Right ventricle myocardium superior (tissue), 1 donor: ENCODE measurements at regions of chr11 and their contacts with region 1.

Region 1: DNA sequence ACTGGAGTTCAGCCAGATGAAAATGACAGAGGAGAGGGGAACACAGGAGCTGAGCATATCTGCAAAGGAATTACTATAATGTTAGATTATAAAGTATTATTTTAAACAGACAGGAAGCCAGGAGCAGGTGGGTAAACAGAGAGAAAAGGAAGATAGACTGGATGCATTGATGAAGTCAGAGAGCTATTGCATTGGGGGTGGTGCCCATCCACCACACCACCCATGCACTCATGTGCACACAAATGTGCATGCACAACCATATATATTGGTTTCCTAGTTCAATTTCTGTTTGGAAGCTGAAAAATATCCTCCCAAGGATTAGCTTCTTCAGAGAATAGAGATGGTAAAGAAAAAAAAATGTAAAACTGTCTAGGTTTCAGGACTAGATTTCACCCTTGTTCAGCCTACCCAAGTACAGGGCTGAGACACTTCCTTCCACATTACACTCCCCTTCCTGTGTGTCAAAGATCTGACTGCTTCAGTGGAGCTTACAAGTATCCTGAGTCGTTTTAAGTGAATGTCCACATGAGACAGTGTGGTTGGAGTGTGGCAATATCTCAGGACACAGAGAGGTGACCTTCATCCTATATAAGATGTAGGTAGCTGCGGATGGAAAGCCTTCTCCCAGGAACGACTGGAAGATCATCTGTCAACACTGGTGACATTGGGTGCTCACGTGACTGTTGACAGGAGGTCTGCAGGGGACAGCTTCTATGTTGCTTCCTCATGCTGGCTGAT is 12.2 kb upstream of the SMPD1 start:
- DNase-seq: no peak
- ATAC-seq: peak; percentile 49

Region 2: DNA sequence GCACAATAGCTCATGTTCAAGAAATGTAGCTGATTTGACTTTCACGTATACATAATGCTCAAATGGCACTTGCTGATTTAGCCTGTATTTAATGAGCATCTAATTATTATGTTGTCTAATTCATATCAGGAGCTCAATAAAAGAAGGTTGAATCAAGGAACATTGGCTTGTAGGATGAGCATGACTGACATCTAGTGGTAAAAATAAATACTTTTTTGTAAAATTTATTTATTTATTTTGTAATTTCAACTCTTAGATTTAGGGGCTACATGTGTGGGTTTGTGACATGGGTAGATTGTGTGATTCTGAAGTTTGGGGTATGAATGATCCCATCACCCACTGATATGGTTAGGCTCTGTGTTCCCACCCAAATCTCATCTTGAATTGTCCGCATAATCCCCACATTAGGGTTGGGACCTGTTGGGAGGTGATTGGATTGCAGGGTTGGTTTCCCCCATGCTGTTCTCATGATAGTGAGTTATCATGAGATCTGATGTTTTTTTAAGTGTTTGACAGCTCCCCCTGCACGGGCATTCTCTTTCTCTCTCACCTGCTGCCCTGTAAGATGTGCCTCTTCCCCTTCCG is 486.8 kb before region 1 on chr11:
- intact Hi-C with region 1: no loop called
- DNase-seq: no peak
- ATAC-seq: no peak

Region 3: DNA sequence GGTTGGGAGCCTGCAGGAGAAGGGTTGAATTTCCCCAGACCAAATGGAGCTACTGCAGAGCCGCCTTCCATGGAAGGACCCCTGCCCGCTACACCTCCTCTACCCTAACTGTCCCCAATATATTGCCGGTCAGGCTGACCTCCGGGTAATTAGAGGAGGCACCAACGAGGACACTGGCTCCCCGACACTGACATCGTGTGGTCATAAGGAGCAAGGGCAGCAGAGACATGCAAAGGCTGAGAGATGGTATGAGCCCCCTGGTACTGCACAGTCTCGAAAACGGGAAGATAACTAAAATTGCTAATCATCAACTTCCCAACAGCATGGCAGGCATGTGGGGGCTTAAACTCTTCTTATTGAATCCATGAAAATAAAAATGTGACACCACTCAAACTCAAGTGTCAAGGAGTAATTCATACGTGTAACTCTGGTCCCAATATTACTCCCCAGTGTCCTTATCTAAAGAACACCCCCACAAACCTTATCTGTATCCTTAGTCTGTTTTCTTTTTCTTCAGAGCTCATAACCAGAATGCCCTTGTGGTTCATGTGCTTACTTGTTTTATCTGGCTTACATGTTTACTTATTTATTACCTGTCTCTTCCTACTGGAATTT is 62.2 kb before region 1 on chr11:
- intact Hi-C with region 1: no loop called
- DNase-seq: peak; percentile 73
- ATAC-seq: peak; percentile 19

Region 4: DNA sequence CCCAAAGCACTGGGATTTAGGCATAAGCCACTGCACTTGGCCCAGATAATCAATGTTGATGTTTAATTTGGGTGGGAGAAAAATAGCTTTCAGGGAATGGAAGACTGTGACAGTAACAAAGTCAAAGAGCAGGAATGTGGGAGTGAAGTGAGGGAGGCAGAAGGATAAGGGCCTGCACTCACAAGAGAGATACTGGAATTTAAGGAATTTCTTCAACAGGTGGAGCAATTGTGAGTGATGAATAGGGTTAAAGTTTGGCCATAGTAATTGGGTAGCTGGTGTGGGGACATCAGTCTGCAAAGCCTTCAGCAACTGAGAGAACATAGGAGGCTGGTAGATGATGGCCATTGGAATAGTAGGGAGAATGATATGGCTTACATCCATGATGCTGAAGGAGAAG is 49.4 kb after region 1 on chr11:
- intact Hi-C with region 1: no loop called
- DNase-seq: no peak
- ATAC-seq: no peak

Region 5: DNA sequence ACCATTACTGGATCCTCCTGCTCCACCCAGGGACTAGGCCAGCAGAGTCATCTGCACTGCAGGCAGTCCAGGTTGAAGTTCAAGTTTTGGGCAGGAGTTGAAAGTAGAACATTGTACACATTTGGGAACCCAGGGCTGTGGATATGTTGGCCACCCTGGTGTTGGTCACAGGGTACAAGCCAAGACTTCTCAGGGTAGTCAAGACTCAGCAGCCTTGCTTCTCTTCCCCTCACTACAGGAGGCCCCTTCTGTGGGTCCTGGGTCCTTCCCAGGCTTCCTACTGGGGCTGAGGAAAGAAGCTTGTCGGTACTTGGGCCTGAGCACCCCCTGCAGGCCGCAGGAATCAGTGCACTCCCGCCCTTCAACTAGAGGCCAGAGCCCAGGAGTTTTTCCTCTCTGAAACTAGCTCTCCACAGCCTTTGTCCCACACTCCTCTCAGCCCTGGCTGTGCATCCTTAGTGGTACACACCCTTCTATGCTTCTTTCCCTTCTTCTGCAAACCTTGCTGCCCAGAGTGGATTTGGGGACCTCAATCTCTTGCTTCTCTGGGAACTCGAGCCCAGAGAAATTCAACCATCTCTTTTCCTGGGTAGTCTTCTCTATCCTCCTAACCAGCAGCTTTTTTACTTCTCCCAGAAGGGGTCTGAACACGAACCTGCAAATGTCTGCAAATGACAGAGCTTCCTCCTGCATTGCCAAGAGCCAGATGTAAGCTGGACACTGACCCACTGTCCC is 65.4 kb after region 1 on chr11:
- intact Hi-C with region 1: loop called (anchors 5 kb)
- DNase-seq: peak; percentile 68
- ATAC-seq: peak; percentile 86

Region 6: DNA sequence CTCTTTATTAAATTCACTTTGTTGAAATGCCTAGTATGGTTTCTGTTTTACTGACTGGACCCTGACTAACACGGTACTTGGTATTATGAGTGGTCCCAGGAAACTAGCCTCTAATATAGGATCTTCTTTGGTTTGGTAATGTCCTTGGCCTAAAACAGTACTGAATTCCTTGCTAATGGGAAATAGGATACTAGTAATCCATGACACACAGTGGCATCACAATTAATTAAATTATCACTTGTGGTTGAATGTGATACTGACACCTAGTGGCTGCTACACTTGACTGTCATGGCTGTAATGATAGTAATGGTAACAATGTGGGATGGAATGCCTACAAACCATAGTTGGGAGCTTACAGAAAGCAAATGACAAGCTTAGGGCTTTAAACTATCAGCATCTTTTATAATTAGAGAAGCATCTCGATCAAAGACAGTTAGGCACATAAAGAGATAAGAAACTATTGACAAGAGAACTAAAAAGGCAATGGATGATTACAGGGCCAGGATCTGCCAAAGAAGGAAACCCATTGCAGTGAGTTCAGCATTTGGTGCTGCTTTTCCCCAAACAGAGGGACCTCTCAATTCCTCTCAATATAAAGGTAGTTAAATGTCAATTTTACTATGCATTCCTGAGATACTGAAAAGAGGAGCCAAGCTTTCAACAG is 127.6 kb after region 1 on chr11:
- intact Hi-C with region 1: loop called (anchors 5 kb)
- DNase-seq: no peak
- ATAC-seq: peak; percentile 68

Region 7: GRCh38 chr11:6705905-6706535 is 327.9 kb after region 1 on chr11:
- intact Hi-C with region 1: loop called (anchors 10 kb)
- DNase-seq: no peak
- ATAC-seq: peak; percentile 66